ENCODE measurements at regions of chr9 and their contacts with region 1.

Region 1: DNA sequence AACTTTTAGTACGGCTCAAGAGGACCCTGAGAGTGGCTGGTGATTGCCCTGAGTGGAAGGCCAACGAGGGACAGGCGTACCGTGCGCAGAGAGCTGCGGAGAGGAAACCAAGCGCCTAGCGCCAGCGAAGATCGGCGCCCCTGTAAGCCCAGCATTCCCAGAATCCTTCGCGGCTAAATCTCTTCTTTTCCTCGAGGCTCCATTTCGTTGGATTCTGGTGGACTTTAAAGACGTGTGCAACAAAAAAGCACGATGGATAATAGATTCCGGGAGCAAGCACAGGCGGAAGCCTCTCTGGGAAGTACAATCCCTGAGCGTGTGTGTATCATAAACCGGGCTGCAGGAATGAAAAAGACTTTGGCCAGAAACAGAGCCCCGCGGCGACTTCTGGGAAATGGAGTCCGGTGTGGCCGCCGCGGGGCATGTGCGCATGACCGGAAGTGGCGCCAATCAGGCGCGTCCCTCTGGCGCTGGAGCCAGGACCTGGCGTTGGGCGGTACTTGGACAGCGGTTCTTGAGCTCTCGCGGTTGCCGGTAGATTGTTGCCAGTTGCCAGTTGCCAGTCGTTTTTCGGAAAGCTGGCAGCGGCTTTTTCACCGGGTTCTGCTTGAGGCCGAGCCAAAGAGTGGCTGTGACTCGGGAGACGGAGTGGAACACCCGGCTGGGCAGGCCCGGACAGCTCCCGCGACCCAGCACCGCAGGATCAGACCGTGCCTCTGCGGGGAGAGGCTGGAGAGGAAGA is at the start of gene ZNF79:
- DNase-seq: peak; percentile 88
- ATAC-seq: peak; percentile 92
- H3K4me3 ChIP-seq: peak within 1 kb of the TSS; percentile 69
- H3K27ac ChIP-seq: peak within 1 kb of the TSS; percentile 87
- H3K4me1 ChIP-seq: peaks cover 7% of the 10 kb centered on the region
- H3K27me3 ChIP-seq: no peaks in the 10 kb centered on the region
- CTCF ChIP-seq: no peak
- POLR2A ChIP-seq: peak; percentile 72
- RAD21 ChIP-seq: no peak
- total RNA-seq, gene ZNF79: 13.9 and 15.4 TPM in 2 replicates

Region 2: DNA sequence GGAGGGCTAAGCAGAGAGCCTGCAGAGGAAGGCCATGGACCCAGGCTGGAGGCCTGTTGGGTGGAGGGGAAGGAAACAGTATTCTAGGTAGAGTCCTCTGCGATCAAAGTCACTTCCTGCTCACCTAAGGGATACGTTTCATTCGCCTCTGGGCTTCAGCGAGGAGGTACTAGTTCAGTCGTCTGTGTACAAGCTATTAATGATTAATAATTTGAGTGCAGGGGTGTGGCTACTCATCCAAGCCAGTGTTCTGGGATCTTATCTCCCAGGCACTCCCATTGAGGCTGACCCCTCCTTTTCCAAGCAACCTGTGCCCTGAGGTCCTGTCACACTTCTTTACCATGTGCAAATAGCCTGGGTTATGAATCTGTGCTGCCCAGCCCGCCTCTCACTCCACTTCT is 484.3 kb before region 1 on chr9:
- CTCF ChIA-PET with region 1: no interaction called
- POLR2A ChIA-PET with region 1: no interaction called
- dilution Hi-C with region 1: no loop called
- in situ Hi-C with region 1: no loop called
- intact Hi-C with region 1: loop called (anchors 2 kb)
- DNase-seq: no peak
- ATAC-seq: no peak
- H3K4me3 ChIP-seq: no peak overlapping the region
- H3K27ac ChIP-seq: no peak overlapping the region
- H3K4me1 ChIP-seq: peaks cover 2% of the 10 kb centered on the region; the same call in 1 of the 2 replicates
- H3K27me3 ChIP-seq: no peaks in the 10 kb centered on the region
- CTCF ChIP-seq: no peak
- POLR2A ChIP-seq: no peak
- RAD21 ChIP-seq: no peak

Region 3: DNA sequence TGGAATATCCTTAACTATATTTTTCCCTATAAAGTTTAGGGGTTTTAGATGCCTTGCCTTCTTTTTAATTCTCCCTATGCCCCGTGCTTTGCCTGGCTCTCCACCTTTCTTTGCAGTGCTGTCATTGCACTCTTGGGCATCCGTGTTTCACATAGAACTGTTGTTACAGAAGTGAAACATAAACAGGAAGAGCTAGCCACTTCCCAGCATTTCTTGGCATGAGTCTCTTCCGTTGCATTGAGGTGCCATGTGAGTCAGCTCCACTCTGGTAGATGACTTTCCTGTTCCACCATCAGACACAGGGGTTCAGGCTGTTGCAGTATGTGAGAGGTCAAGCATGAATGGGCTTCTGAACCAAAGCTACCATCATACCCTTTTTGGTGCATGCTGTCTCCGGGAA is 375.1 kb before region 1 on chr9:
- CTCF ChIA-PET with region 1: no interaction called
- POLR2A ChIA-PET with region 1: no interaction called
- dilution Hi-C with region 1: no loop called
- in situ Hi-C with region 1: no loop called
- intact Hi-C with region 1: no loop called
- DNase-seq: peak; percentile 97
- ATAC-seq: peak; percentile 93
- H3K4me3 ChIP-seq: no peak overlapping the region
- H3K27ac ChIP-seq: peak overlapping the region; percentile 6; the same call in 1 of the 2 replicates
- H3K4me1 ChIP-seq: peaks cover 4% of the 10 kb centered on the region
- H3K27me3 ChIP-seq: no peaks in the 10 kb centered on the region
- CTCF ChIP-seq: peak; percentile 34
- POLR2A ChIP-seq: no peak
- RAD21 ChIP-seq: peak; percentile 12

Region 4: GRCh38 chr9:127092041-127092608 is 332.0 kb before region 1 on chr9:
- CTCF ChIA-PET with region 1: no interaction called
- POLR2A ChIA-PET with region 1: no interaction called
- dilution Hi-C with region 1: no loop called
- in situ Hi-C with region 1: no loop called
- intact Hi-C with region 1: no loop called
- DNase-seq: no peak
- ATAC-seq: no peak
- H3K4me3 ChIP-seq: no peak overlapping the region
- H3K27ac ChIP-seq: no peak overlapping the region
- H3K4me1 ChIP-seq: no peaks in the 10 kb centered on the region
- H3K27me3 ChIP-seq: no peaks in the 10 kb centered on the region
- CTCF ChIP-seq: no peak
- POLR2A ChIP-seq: no peak
- RAD21 ChIP-seq: no peak

Region 5: DNA sequence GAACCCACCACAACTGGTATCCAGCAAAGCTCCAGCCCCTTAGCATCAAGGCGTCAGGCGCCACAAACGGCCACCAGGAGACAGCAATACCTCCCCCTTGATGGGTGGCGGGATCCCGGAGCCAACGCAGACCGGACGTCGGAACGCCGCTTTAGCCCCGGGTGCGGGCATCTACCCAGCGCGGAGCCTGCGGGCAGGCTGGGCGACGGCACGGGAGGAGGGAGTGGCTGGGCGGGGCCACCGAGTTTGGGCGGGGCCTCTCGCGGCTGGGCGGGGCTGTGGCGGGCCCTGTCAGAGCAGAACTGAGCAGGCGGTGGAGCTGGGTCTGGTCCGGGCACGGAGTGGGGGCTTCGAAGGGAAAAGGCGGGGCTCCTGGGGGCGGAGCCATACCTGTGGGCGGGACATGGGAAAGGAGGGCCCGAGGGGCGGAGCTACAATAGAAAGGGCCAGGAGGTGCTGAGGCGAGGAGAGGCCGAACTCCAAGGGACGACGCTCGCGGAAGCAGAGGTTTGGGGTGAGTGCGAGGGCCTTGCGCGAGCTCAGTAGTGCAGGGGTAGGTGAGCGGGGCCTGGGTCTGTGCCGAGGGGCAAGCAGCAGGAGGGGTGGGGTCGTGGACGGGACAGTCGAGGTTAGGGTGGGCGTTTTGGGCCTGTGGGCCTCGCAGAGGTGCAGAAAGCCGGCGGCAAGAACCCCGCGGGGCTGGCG is 199.8 kb before region 1 on chr9:
- CTCF ChIA-PET with region 1: no interaction called
- POLR2A ChIA-PET with region 1: no interaction called
- dilution Hi-C with region 1: no loop called
- in situ Hi-C with region 1: no loop called
- intact Hi-C with region 1: loop called (anchors 10 kb)
- DNase-seq: peak; percentile 69
- ATAC-seq: peak; percentile 72
- H3K4me3 ChIP-seq: peak overlapping the region; percentile 85
- H3K27ac ChIP-seq: peak overlapping the region; percentile 63
- H3K4me1 ChIP-seq: no peaks in the 10 kb centered on the region
- H3K27me3 ChIP-seq: peaks cover 29% of the 10 kb centered on the region
- CTCF ChIP-seq: peak; percentile 20; the same call in 1 of the 2 replicates
- POLR2A ChIP-seq: no peak
- RAD21 ChIP-seq: peak; percentile 16; the same call in 1 of the 2 replicates

Region 6: GRCh38 chr9:127545196-127546124 is 121.4 kb after region 1 on chr9:
- CTCF ChIA-PET with region 1: no interaction called
- POLR2A ChIA-PET with region 1: no interaction called
- dilution Hi-C with region 1: no loop called
- in situ Hi-C with region 1: no loop called
- intact Hi-C with region 1: no loop called
- DNase-seq: peak; percentile 56
- ATAC-seq: peak; percentile 41
- H3K4me3 ChIP-seq: no peak overlapping the region
- H3K27ac ChIP-seq: peak overlapping the region; percentile 63
- H3K4me1 ChIP-seq: peaks cover 61% of the 10 kb centered on the region
- H3K27me3 ChIP-seq: no peaks in the 10 kb centered on the region
- CTCF ChIP-seq: no peak
- POLR2A ChIP-seq: no peak
- RAD21 ChIP-seq: no peak